WTC11 (cell line): ENCODE measurements at regions of chr3 and their contacts with region 1.

Region 1: DNA sequence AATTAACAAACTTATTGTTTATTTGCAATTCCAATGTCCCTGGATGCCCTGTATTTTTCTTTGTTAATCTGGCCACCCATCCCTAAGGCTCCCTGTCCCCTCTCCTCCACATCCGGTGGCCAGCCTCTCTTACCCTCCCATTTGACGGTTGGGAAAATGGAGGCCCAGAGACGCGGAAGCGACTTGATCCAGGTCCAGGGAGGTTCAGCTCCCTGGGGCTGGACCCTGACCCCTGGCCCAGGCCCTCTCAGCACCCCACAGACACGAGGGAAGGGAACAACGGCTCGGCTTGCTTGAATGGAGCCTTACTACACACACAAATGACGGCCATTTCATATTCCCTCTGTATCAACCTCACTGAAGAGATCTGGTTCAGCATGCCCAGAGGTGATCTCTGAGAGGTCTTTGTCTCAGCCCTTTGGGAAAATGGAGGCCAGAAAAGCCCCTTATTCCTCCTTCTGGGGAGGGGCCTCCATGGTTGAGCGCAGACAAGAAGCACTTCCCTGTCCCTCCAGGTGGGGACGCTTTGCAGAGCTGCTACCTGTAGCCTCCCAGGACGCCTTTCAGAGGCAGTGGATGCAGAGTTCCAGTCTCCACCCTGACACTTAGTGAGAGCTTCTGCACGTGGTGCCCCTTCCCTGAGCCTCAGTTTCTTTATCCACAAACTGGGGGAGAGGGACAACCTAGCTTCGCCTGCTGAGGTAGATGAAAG is 82.1 kb downstream of the ATP2B2 start:
- DNase-seq: peak; percentile 50
- ATAC-seq: peak; percentile 76
- H3K4me3 Mint-ChIP-seq: no peak overlapping the region
- H3K27ac Mint-ChIP-seq: no peak overlapping the region
- H3K4me1 Mint-ChIP-seq: peaks cover 2% of the 10 kb centered on the region; the same call in 1 of the 2 replicates
- H3K27me3 Mint-ChIP-seq: peaks cover 3% of the 10 kb centered on the region; the same call in 1 of the 2 replicates
- CTCF ChIP-seq: no peak

Region 2: GRCh38 chr3:10299679-10300078 is 123.6 kb before region 1 on chr3:
- CTCF ChIA-PET with region 1: no interaction called
- POLR2A ChIA-PET with region 1: no interaction called
- DNase-seq: no peak
- ATAC-seq: no peak
- H3K4me3 Mint-ChIP-seq: no peak overlapping the region
- H3K27ac Mint-ChIP-seq: no peak overlapping the region
- H3K4me1 Mint-ChIP-seq: no peaks in the 10 kb centered on the region
- H3K27me3 Mint-ChIP-seq: no peaks in the 10 kb centered on the region
- CTCF ChIP-seq: no peak

Region 3: DNA sequence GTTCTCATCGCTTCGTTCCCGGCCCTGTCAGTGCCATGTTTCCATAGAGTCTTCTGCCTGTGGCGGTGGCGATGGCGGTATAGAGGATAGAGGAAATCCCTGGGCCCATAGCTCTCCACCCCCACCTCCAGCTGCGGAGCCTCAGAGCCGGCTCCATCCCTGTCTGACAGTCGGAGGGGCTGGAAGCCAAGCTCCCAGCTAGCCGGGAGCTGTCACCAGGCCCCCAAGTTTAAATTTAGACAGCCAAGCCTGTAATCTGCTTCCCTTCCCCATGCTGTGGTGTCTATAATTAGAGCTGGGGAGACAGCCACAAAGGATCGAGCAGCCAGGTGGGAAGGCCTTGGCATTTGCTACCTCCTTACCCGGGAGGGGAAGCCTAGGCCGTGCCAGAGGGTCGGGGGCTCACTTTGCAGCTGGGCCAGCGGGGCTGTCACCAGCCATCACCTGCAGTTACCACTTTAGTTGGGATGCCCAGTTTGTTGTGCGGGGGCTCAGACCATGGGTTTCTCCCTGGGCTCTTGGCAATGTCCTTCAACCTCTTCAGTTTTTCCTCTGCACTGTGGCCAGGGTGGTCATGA is 46.1 kb before region 1 on chr3:
- CTCF ChIA-PET with region 1: no interaction called
- POLR2A ChIA-PET with region 1: no interaction called
- DNase-seq: no peak
- ATAC-seq: no peak
- H3K4me3 Mint-ChIP-seq: no peak overlapping the region
- H3K27ac Mint-ChIP-seq: no peak overlapping the region
- H3K4me1 Mint-ChIP-seq: peaks cover 35% of the 10 kb centered on the region
- H3K27me3 Mint-ChIP-seq: no peaks in the 10 kb centered on the region
- CTCF ChIP-seq: no peak

Region 4: GRCh38 chr3:10413041-10413440 is 10.3 kb before region 1 on chr3:
- CTCF ChIA-PET with region 1: interaction called, 11 read pairs
- POLR2A ChIA-PET with region 1: no interaction called
- DNase-seq: no peak
- ATAC-seq: no peak
- H3K4me3 Mint-ChIP-seq: no peak overlapping the region
- H3K27ac Mint-ChIP-seq: no peak overlapping the region
- H3K4me1 Mint-ChIP-seq: peaks cover 3% of the 10 kb centered on the region; the same call in 1 of the 2 replicates
- H3K27me3 Mint-ChIP-seq: no peaks in the 10 kb centered on the region
- CTCF ChIP-seq: no peak

Region 5: DNA sequence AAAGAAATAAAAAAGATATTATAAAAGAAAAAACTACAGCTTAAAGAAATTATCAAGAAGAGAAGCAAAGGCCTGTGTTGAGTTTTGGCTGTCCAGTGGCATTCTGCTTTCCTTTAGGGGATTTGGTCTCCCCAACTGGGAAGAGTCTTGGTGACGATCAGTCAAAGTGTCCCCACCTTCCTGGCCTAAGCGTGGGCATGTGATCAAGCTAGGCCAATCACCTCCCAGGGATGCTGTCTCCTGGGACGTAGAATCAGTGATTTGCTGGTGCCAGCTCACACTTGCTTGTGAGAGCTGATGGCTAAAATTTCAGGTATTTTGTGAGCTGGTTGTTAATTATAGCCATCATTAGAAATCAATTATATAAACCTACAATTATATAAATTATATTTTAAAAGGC is 12.5 kb after region 1 on chr3:
- CTCF ChIA-PET with region 1: interaction called, 12 read pairs
- POLR2A ChIA-PET with region 1: no interaction called
- DNase-seq: no peak
- ATAC-seq: peak; percentile 46
- H3K4me3 Mint-ChIP-seq: no peak overlapping the region
- H3K27ac Mint-ChIP-seq: no peak overlapping the region
- H3K4me1 Mint-ChIP-seq: 0 out of 2 replicates have a peak, but pooled peaks cover 2% of the 10 kb centered on the region
- H3K27me3 Mint-ChIP-seq: no peaks in the 10 kb centered on the region
- CTCF ChIP-seq: no peak